ENCODE measurements at regions of chr20 and their contacts with region 1.

Region 1: DNA sequence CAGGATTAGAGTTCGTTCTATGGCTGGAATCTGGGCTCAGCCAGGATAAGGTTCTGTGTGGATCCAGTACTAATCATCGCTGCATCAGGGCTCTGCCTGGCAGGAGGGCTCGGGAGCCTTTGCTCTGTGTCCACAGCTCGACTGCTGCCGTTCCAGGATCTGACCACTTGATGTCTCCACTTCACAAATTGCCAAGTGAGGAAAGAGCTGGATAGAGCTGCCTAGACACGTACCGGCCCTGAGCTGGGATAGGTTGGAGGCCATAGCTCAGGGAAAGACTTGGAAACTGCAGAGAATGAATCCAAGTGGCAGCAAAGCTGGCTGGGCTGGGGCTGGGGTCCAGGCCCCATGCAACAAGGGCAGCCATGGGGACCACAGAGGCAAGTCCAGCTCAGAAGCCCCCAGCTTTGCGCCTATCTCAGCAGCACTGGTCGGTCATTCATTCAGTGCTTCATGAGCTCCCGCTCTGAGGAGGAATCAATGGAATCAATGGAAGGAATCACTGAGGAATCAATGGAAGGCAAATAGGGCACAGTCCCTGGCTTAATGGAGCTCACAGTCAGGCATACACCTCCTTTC is 38.0 kb upstream of the TOP1 start:
- DNase-seq: peak; percentile 84 to 88
- H3K4me3 ChIP-seq: no peak overlapping the region
- H3K27ac ChIP-seq: no peak overlapping the region
- H3K4me1 ChIP-seq: peaks cover 0 to 7% (median 2%) of the 10 kb centered on the region in 4 donors
- H3K27me3 ChIP-seq: no peaks in the 10 kb centered on the region
- CTCF ChIP-seq: peak; percentile 78 to 86

Region 2: DNA sequence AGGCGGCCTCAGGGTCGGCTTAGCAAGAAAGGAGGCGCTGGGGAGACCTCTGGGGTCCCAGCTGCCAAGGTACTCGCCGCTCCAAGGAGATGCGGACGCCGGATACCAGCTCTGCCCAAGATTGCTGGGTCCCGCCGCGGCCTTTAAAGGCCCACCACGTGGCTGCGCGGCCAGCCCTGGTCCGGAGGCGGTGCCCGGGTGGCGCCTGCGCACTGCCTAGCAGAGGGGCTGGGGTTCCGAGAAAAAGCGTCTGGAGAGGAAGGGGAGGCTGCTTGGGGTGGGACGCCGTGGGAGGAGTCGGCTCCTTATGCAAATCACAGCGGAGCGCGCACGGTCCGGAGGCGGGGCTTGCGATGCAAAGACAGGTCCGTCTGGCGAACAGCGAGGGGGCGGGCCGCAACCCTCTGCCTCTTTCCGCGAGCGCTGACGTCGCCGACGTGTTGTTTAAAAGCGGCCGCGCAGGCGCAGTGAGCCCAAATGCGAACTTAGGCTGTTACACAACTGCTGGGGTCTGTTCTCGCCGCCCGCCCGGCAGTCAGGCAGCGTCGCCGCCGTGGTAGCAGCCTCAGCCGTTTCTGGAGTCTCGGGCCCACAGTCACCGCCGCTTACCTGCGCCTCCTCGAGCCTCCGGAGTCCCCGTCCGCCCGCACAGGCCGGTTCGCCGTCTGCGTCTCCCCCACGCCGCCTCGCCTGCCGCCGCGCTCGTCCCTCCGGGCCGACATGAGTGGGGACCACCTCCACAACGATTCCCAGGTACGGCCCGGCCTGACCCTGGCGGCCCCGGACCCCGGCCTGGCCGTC is 37.9 kb after region 1 on chr20 and contains the start of gene TOP1:
- intact Hi-C with region 1: no loop called
- DNase-seq: peak; percentile 100
- H3K4me3 ChIP-seq: peak within 1 kb of the TSS; percentile 81 to 100
- H3K27ac ChIP-seq: peak within 1 kb of the TSS; percentile 96 to 99
- H3K4me1 ChIP-seq: peaks cover 0 to 42% (median 21%) of the 10 kb centered on the region in 4 donors
- H3K27me3 ChIP-seq: no peaks in the 10 kb centered on the region
- CTCF ChIP-seq: no peak

Region 3: DNA sequence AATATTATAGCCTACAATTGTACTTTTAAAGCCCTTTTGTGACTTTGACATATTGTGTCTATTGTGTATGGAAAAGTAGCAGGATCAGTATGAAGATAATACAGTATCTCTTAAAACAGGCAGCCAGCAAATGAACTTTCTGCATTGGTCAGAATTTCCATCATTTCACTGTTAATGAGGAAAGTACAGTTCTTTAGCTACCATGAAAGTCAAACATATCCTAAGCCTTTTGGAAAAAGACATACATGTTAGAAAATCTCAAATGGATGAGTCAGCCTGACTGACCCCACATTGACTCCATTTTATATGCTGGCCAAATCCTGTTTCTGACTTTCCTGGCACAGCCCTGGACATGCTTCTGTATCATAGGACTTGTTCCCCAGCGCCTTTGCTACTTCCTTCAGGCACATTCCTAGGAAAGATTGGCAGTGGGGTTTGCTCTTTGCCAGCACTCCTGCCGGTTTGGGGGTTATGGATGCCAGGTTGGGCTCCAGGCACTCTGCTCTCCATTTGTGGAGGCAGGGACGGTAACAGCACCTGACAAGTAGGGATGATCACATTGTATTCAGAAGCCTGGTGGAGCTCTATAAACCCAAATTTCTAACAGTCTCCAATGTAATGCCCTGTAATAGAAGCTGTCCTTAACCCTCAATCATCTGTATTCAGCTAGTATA is 81.7 kb after region 1 on chr20:
- intact Hi-C with region 1: no loop called
- DNase-seq: peak; percentile 59 to 68
- H3K4me3 ChIP-seq: no peak overlapping the region
- H3K27ac ChIP-seq: peak overlapping the region; percentile 47 to 58
- H3K4me1 ChIP-seq: peaks cover 0 to 88% (median 52%) of the 10 kb centered on the region in 4 donors
- H3K27me3 ChIP-seq: no peaks in the 10 kb centered on the region
- CTCF ChIP-seq: no peak

Region 4: GRCh38 chr20:41095110-41095969 is 104.7 kb after region 1 on chr20:
- intact Hi-C with region 1: loop called (anchors 2 kb)
- DNase-seq: peak in 1 of 2 donors; percentile 40
- H3K4me3 ChIP-seq: no peak overlapping the region
- H3K27ac ChIP-seq: no peak overlapping the region
- H3K4me1 ChIP-seq: no peaks in the 10 kb centered on the region
- H3K27me3 ChIP-seq: no peaks in the 10 kb centered on the region
- CTCF ChIP-seq: peak; percentile 83 to 87

Region 5: DNA sequence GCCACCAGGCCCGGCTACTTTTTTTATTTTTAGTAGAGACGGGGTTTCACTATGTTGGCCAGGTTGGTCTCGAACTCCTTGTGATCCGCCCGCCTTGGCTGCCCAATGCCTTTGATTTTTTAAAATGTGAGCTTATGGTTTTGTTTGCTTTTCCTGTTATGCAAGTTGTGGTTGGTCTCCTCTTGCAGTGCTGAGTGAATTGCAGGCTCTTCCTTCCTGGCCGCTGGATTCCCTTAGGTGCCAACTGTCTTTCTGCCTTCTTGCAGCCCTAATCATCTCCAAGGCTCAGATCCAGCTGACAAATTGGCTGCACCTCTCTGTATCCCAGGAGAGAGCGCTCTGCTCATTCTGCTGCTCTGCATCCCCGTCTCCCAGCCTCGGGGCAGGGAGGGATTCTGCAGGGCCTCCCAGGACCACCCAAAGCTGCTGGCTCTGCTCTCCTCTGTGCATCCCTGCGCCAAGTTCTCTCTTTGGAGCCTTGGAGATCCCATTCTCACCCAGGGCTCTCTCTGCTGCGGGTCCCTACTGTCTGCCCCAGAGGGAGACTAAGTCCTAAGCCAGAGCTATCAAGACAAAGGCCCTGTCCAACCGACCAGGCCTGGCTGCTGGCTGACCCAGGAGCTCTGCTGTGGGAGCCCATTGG is 390.0 kb after region 1 on chr20:
- intact Hi-C with region 1: no loop called
- DNase-seq: no peak
- H3K4me3 ChIP-seq: no peak overlapping the region
- H3K27ac ChIP-seq: no peak overlapping the region
- H3K4me1 ChIP-seq: no peaks in the 10 kb centered on the region
- H3K27me3 ChIP-seq: peaks cover 0 to 13% of the 10 kb centered on the region in 2 donors
- CTCF ChIP-seq: no peak

Region 6: DNA sequence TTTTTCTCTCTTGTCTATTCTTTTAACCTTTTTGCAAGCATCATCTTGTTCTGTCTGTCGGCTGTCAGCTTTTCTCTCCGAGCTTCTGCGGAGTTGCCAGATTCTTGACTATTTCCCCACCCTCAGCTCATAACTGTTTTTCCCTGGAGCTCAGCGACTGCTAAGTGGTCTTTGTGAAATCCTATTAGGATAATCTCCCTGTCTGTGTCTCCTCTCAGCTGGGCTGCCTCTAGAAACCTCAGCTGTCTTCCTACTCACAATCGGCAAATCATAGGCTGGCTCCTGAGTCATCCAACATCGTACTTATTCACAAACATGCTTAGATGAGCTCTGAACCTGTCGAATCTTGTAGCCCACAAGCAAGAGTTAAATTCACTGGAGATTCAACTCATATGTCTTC is 1866.8 kb after region 1 on chr20:
- intact Hi-C with region 1: loop called (anchors 5 kb)
- DNase-seq: no peak
- H3K4me3 ChIP-seq: no peak overlapping the region
- H3K27ac ChIP-seq: no peak overlapping the region
- H3K4me1 ChIP-seq: no peaks in the 10 kb centered on the region
- H3K27me3 ChIP-seq: no peaks in the 10 kb centered on the region
- CTCF ChIP-seq: no peak

Measured in tibial artery (tissue), 4 donors.